ENCODE measurements at regions of chr6 and their contacts with region 1.

Region 1: GRCh38 chr6:116667623-116668022 is 943 bp downstream of the ZUP1 start:
- DNase-seq: no peak
- H3K4me3 Mint-ChIP-seq: peak overlapping the region; percentile 94
- H3K27ac Mint-ChIP-seq: peak overlapping the region; percentile 98
- H3K4me1 Mint-ChIP-seq: peaks cover 32% of the 10 kb centered on the region
- H3K27me3 Mint-ChIP-seq: peaks cover 19% of the 10 kb centered on the region

Region 2: DNA sequence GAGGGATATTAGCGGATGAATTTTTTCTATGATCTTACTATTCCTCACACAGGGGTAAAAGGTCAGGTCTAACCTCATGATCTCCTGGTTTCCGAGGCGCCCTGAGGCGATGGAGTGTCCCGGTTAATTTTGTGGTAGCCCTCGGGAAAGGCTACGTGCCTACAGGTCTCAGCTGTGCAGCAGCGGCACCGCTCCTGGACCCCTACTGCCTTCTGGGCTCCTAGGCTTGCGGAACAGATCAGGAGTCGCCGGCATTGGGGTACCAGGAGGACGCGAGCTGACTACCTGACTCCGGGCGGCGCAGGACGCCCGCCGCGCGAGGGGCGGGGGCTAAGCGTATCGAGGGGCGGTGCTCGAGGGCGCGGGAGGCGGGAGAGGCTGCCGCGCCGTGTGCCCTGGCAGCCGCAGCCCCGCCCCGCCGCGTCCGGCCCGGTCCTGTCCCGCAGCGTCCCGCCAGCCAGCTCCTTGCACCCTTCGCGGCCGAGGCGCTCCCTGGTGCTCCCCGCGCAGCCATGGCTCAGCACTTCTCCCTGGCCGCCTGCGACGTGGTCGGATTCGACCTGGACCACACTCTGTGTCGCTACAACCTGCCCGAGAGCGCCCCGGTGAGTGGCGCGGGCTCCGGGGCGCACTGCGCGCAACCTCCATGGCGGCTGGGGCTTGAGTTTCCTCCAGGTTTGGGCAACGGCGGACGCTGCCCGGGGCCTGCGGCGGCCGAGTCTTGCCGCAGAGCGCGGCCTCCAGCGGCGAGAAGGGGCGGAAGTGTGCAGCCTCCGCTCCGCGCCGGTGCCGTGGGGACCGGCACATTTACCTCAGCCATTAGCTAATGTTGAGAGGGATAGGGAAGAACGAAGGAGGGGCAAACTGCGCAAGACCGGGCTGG is 567.0 kb before region 1 on chr6 and contains the start of gene NT5DC1:
- intact Hi-C with region 1: loop called (anchors 2 kb)
- DNase-seq: peak; percentile 96
- H3K4me3 Mint-ChIP-seq: peak within 1 kb of the TSS; percentile 95
- H3K27ac Mint-ChIP-seq: peak within 1 kb of the TSS; percentile 92
- H3K4me1 Mint-ChIP-seq: peaks cover 38% of the 10 kb centered on the region
- H3K27me3 Mint-ChIP-seq: no peaks in the 10 kb centered on the region
- total RNA-seq, gene NT5DC1: 38.1 and 38.9 TPM in 2 replicates

Region 3: DNA sequence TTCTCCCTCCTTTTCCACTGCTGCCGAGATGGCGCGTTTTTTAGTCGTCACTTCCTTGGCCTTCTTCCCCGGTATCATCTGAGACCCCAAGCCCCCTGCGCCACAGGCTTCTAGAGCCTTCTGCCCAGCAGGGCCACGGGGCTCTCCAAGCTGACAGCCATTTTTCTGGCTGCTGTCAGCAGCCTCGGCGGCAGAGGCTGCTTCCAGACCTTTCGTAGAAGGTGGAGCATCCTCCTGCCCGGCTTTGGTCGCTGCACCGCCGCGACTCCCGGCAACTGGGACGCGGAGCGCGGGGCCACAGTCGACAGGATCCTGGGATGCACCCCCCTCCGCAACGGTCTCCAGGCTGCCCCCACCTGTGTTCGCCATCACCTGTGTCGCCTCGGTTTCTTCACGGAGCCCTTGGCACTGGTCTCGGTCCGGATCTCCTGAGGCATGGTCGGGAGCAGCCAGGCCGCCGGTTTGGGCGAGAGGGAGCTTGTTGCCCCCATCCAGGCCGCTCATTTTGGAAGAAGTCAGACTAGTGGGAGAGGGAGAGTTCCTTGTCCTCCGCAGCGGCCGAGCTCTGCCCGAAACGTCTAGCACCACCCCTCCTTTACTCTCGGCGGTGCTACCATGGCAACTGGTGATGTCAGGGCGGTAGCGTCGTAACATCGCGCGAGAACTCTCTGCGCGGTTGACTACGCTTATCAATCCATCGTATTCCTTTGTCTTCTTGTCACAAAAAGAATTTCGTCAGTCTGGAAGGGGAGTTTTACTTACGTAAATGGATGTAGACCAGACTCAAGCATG is 413.9 kb before region 1 on chr6 and contains the start of gene TSPYL4:
- intact Hi-C with region 1: loop called (anchors 10 kb)
- DNase-seq: peak; percentile 98
- H3K4me3 Mint-ChIP-seq: no peak within 1 kb of the TSS
- H3K27ac Mint-ChIP-seq: no peak within 1 kb of the TSS
- H3K4me1 Mint-ChIP-seq: peaks cover 25% of the 10 kb centered on the region
- H3K27me3 Mint-ChIP-seq: no peaks in the 10 kb centered on the region
- total RNA-seq, gene TSPYL4: 22.1 and 22.2 TPM in 2 replicates

Region 4: DNA sequence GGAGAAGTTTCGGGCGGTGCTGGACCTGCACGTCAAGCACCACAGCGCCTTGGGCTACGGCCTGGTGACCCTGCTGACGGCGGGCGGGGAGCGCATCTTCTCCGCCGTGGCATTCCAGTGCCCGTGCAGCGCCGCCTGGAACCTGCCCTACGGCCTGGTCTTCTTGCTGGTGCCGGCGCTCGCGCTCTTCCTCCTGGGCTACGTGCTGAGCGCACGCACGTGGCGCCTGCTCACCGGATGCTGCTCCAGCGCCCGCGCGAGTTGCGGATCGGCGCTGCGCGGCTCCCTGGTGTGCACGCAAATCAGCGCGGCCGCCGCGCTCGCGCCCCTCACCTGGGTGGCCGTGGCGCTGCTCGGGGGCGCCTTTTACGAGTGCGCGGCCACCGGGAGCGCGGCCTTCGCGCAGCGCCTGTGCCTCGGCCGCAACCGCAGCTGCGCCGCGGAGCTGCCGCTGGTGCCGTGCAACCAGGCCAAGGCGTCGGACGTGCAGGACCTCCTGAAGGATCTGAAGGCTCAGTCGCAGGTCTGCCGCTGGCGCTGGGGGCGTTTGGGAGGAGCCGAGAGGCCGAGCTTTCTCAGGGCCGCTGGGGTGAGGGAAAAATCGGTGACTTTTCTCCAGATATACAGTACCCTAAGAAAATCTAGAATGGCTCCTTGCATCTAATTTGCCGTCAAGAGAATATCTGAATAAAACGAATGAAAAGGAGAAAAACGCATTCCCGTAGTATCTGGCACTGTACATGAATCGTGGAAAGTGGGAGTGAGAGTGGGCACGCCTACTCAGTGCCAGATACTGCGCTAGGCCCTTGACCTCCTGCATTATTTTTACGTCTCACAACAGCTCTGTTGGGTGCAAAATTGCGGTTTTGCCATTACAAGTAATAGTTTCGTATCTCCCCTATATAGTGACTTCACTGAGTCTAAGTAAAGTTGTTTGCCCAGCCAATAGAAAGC is 205.4 kb before region 1 on chr6:
- intact Hi-C with region 1: loop called (anchors 5 kb)
- DNase-seq: peak; percentile 91
- H3K4me3 Mint-ChIP-seq: peak overlapping the region; percentile 75
- H3K27ac Mint-ChIP-seq: peak overlapping the region; percentile 85
- H3K4me1 Mint-ChIP-seq: peaks cover 76% of the 10 kb centered on the region
- H3K27me3 Mint-ChIP-seq: no peaks in the 10 kb centered on the region

Region 5: DNA sequence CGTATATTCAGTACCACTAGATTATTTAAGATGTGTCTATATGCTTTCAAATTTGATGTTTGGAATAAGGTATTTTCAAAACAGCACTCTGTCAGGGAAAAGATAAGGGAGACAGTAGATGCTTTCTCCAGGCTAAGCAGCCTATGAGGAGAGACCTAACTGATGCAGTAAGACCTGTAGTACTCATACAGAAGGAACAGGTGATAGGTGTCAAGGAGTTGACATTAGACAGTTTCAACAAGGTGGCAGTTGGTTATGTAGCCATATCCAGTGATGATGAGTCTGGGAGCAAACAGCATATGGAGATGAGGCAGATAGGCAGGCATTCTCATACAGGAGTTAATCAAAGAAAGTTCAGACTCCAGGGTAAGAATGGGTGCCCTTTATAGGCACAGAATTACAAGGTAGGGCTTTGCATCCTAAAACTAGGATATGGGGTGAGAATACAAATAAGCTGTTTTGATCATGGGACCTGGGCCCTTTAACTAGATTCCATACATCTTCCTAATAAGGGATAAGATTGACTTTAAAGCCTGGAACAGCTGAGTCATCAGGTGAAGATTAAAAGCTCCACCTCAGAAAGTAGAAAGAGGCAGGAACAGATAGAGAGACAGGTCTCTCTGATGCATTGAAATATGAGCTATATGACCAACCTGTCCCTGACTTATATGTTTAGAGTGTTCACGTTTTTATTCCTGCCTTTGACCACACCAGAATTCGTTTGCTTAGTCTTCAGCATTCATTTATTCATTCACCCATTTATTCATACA is 43.4 kb before region 1 on chr6:
- intact Hi-C with region 1: no loop called
- DNase-seq: no peak
- H3K4me3 Mint-ChIP-seq: no peak overlapping the region
- H3K27ac Mint-ChIP-seq: no peak overlapping the region
- H3K4me1 Mint-ChIP-seq: no peaks in the 10 kb centered on the region
- H3K27me3 Mint-ChIP-seq: peaks cover 7% of the 10 kb centered on the region

Region 6: GRCh38 chr6:116680975-116681808 is 13.6 kb after region 1 on chr6 and contains the start of gene KPNA5:
- intact Hi-C with region 1: loop called (anchors 1 kb)
- DNase-seq: peak; percentile 97
- H3K4me3 Mint-ChIP-seq: peak within 1 kb of the TSS; percentile 99
- H3K27ac Mint-ChIP-seq: peak within 1 kb of the TSS; percentile 99
- H3K4me1 Mint-ChIP-seq: peaks cover 29% of the 10 kb centered on the region
- H3K27me3 Mint-ChIP-seq: no peaks in the 10 kb centered on the region
- total RNA-seq, gene KPNA5: 7.2 and 7.7 TPM in 2 replicates

Region 7: DNA sequence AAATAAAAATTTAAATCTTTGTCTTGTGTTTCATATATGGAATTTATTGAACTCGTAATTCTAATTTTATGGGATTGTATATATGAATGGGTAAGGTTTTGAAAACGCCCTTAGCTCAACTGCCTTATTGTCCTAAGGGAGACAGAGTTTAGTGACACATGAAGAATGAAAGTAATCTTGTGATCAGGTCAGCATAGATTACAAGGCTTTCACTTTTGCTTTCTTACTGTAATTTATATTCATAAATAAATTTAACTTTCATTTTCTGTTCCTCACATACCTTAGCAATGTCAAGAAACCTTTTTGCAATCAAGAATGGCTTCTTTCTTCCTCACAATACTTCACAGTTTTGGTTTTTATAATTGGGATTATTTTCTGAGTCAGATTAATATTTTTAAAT is 27.8 kb after region 1 on chr6:
- intact Hi-C with region 1: loop called (anchors 1 kb)
- DNase-seq: peak; percentile 55
- H3K4me3 Mint-ChIP-seq: no peak overlapping the region
- H3K27ac Mint-ChIP-seq: no peak overlapping the region
- H3K4me1 Mint-ChIP-seq: peaks cover 20% of the 10 kb centered on the region
- H3K27me3 Mint-ChIP-seq: no peaks in the 10 kb centered on the region

Region 8: GRCh38 chr6:116741571-116741970 is 73.9 kb after region 1 on chr6:
- intact Hi-C with region 1: no loop called
- DNase-seq: no peak
- H3K4me3 Mint-ChIP-seq: no peak overlapping the region
- H3K27ac Mint-ChIP-seq: no peak overlapping the region
- H3K4me1 Mint-ChIP-seq: no peaks in the 10 kb centered on the region
- H3K27me3 Mint-ChIP-seq: peaks cover 5% of the 10 kb centered on the region

Measured in activated CD4-positive, alpha-beta T cell treated with anti-CD3 and anti-CD28 coated beads, Interleukin-2, amount 10 ng/mL, durations not matched to agents 24 days and 14 days (primary cell).